AG04449 (cell line): ENCODE measurements at regions of chr1 and their contacts with region 1.

Region 1: GRCh38 chr1:152926091-152926490 is 17.7 kb downstream of the IVL start:
- DNase-seq: peak; percentile 37
- H3K4me3 ChIP-seq: no peak overlapping the region
- CTCF ChIP-seq: peak; percentile 76

Region 2: DNA sequence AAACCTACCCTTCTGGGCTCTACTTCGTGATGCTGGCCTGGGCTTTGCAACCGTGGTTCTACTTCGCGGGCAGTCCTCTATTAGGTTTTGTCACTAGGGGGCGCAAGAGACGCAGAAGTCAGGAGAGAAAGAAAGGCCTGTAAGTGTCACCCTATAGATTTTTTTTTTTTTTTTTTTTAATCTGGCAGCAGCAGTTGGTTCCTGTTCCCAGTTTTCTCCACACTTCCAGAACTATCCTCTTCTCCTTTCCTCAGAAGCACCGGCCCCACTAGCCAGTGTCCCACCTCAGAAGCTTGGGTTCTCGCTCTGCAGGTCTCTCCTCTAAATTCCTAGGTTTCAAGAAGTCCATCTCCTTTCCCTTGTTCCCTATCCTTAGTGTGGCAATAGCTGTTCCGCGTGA is 272.0 kb before region 1 on chr1:
- CTCF ChIA-PET with region 1: interaction called, 15 read pairs
- POLR2A ChIA-PET with region 1: no interaction called
- DNase-seq: no peak
- H3K4me3 ChIP-seq: no peak overlapping the region
- CTCF ChIP-seq: peak; percentile 59

Region 3: DNA sequence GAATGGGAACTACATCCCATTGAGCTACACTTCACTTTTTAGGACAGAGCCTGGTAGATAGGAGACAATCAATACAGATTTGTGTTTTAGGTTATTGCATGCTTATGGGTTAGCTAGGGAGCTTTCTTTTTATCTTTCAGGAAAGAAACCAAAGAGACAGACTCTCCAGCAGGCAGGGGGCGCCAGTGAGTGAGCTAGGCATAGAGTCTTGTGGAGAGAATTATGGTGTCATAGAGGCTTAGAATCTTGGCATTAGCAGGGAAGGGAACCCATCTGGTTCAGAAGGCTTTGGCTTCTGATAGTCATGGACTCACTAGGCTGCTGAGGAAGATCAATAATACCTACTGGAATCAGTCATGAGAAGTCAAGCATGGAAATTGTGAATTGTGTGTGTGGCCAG is 48.0 kb before region 1 on chr1 and contains the start of gene SMCP:
- CTCF ChIA-PET with region 1: interaction called, 375 read pairs
- POLR2A ChIA-PET with region 1: no interaction called
- DNase-seq: no peak
- H3K4me3 ChIP-seq: no peak within 1 kb of the TSS
- CTCF ChIP-seq: no peak

Region 4: GRCh38 chr1:152899883-152900282 is 26.2 kb before region 1 on chr1:
- CTCF ChIA-PET with region 1: interaction called, 10 read pairs
- POLR2A ChIA-PET with region 1: no interaction called
- DNase-seq: no peak
- H3K4me3 ChIP-seq: no peak overlapping the region
- CTCF ChIP-seq: no peak

Region 5: DNA sequence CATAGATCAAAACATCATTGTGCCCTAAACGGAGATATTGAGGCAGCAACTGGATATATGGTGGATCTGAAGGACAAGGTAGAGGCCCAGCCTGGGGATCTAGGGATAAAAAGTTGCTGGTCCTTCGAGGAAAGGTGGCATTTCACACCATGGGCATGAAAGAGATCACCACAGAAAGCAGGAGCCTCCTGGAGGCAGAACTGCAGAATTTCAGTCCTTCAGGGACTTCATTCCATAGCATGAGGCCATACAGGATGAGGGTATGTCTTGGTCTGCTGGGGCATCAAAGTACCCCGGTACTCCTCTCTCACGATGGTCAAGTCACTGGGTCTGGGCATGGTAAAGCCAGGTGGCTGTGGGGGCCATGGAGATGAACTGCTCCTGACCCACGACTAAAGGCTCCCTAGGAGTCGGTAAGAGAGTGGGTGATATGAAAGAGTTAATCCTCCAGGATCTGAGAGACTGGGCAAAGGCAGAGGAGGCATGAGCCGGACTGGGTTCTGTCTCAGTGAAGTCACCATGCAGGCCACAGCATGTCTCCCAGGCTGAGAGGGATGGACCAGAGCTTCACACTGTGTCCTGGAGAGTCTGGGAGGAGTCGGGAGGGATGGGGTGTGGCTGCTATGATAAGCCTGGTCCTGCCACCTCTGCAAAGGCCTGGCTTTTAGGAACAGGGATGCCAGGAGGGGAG is 15.1 kb after region 1 on chr1:
- CTCF ChIA-PET with region 1: interaction called, 13 read pairs
- POLR2A ChIA-PET with region 1: no interaction called
- DNase-seq: no peak
- H3K4me3 ChIP-seq: no peak overlapping the region
- CTCF ChIP-seq: no peak